Sciatic nerve (tissue), 2 donors: ENCODE measurements at regions of chr2 and their contacts with region 1.

Region 1: GRCh38 chr2:5695981-5696745 is 4.0 kb downstream of the SOX11 start:
- DNase-seq: no peak
- ATAC-seq: no peak

Region 2: DNA sequence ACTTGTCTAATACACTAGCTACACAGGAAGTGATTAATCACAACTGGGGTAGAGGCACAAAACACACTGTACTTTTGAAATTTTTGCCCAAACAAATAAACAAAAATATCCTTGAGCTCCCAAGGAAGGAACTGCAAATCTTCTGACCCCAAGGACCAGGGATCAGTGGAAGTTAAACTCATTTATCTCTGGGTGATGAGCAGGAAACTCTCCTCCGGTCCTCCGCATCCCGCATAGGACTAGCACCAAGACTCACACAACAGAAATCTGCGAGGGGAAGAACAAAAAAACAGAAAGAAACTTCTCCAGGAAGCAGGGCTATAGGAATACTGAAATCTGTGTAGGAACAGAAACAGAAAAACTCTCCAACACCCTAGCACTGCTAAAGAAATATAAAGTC is 1342.5 kb before region 1 on chr2:
- intact Hi-C with region 1: no loop called
- DNase-seq: no peak
- ATAC-seq: no peak

Region 3: DNA sequence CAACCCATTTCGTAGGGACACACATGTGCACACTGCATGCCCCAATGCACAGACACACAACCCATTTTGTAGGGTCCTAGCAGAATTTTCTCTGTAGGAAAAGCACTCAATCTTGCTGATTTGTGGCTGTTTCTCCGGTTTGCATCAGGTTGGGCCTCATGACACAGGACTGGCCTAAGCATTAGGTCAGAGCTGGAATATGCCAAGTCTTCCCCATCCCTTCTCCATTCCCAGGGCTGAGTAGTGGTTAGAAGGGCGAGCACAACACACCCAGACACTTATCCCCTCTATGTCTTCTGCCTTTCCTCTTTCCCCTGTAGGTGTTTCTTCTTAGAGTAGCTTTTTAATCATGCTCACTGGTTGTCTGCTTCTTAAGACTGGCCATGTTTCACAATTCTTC is 292.0 kb after region 1 on chr2:
- intact Hi-C with region 1: loop called (anchors 2 kb)
- DNase-seq: no peak
- ATAC-seq: no peak